ENCODE measurements at regions of chr15 and their contacts with region 1.

Region 1: GRCh38 chr15:74382004-74382816 is 14.8 kb upstream of the CYP11A1 start:
- DNase-seq: peak; percentile 88 to 93 (median 91)
- H3K4me3 ChIP-seq: no peak overlapping the region
- H3K27ac ChIP-seq: no peak overlapping the region
- H3K4me1 ChIP-seq: peaks cover 0 to 21% (median 9%) of the 10 kb centered on the region in 3 donors
- H3K27me3 ChIP-seq: no peaks in the 10 kb centered on the region
- CTCF ChIP-seq: peak; percentile 93

Region 2: DNA sequence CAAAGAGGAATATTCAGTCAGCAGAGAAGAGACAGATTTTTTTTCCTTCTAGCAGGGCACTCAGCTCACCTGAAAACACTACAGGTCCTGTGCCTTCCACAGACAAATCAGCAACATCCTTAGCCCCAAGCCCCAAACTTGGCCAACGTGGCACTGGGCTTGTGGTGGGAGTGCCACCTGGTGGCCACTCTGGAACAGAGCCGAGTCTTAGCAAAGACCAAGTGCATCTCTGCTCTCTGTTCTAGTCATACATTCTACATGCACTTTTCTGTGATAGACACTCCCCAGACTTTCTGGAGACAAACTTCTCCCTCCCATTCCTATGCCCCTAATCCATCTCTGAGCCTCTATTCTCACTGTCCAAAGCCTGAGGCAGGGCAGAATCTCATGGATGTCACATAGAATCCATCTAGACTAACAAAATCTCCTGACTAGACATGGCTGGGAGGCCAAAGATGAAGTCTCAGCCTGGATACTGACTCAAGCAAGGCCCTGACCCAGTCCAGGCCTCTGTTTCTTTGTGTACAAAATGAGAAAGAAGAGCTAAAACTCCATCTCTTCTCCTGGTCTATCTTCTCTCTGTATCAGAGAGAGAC is 56.6 kb after region 1 on chr15:
- intact Hi-C with region 1: loop called (anchors 5 kb)
- DNase-seq: peak; percentile 81 to 87 (median 82)
- H3K4me3 ChIP-seq: no peak overlapping the region
- H3K27ac ChIP-seq: no peak overlapping the region
- H3K4me1 ChIP-seq: peaks cover 0 to 3% (median 0%) of the 10 kb centered on the region in 3 donors
- H3K27me3 ChIP-seq: no peaks in the 10 kb centered on the region
- CTCF ChIP-seq: peak; percentile 90

Region 3: DNA sequence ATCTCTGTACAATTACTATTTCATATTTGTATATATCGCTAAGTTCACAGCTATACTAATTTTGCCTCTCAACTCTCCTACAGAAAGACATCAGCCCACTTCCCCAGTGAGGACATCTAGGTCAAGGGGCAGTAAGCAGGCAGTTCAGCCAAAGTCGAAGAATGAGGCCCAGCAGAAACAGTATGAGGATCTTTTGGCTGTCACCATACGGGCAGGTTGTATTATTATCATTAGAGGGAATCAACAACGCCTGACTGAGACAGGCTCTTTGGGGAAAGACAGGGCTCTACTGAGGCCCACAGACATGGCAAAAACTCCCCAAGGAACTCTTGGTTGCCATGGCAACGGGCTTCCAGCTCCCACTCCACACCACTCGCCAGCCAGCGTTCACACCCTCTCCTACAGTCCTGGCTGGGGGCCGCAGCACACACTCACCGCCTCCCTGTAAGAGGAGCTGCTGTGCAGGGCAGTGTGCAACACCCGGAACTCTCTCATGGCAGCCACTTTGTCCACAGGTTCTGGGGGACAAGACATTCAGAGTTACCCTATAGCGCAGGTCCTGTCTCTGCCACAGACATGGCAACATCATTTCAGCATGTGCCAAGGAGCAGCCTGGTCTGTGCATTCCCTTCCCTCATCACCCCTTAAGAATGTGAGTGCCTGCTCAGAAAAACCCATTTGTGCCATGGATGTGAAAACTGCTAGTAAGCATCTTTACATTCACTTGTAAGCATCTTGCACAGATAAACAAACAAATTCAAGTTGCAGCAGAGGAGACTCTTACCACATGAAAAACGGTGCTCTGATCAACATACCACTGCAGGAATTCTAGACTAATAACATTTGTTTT is 69.9 kb after region 1 on chr15:
- intact Hi-C with region 1: no loop called
- DNase-seq: peak in 1 of 5 donors; percentile 25
- H3K4me3 ChIP-seq: no peak overlapping the region
- H3K27ac ChIP-seq: no peak overlapping the region
- H3K4me1 ChIP-seq: no peaks in the 10 kb centered on the region
- H3K27me3 ChIP-seq: no peaks in the 10 kb centered on the region
- CTCF ChIP-seq: no peak